Heart left ventricle (tissue), 16 donors: ENCODE measurements at regions of chr19 and their contacts with region 1.

Region 1: DNA sequence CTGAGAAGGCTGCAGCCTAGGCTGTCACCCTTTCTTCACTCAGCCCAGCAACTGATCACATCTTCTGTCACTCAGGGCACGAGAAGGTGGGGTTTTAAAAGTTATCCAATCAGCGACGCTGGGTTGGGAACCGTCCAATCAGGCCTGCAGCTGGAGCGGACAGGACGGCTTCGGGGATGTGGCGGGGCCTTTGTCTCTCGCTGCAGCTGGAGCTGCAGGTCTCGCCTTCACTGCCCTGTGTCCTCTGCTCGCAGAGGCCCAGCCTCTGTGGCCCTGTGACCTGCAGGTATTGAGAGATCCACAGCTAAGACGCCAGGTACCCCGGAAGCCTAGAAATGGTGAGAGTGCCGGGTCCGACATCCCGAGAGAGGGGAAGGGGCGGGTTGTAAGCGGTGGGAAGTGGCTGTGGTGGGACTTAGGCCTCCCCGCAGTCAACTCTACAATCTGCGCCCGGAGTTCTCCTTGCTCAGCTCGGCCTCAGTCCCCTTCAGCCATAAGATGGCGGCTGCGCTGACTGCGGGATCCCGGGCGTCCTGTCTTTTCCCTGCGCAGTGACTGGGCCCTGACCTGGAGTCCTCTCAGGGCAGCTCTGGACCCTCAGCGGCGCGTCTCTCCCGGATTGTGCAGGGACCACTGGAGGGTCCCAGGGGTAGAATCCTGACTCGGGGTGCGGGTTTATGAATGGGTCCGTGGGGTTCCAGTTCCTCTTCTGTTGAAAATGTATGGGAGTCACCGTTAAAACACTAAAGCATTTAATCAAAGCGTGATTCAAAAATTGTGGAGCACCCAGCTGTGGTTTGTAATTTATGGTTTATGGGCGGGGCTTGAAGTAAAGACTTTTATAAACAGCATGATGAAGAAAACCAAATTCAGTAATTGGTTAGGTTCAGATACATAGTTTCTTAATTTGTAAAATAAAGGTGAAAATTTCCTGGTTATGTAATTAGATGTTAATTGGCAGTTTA is at the start of gene ZNF714:
- DNase-seq: peak; percentile 87 to 95 (median 92)
- ATAC-seq: peak; percentile 100
- H3K4me3 ChIP-seq: peak within 1 kb of the TSS; percentile 43 to 89 (median 67)
- H3K27ac ChIP-seq: peak within 1 kb of the TSS in 8 of 12 donors; percentile 31 to 76 (median 68)
- H3K4me1 ChIP-seq: peaks cover 0 to 13% (median 0%) of the 10 kb centered on the region in 12 donors
- H3K27me3 ChIP-seq: no peaks in the 10 kb centered on the region
- CTCF ChIP-seq: no peak
- POLR2A ChIP-seq: no peak
- total RNA-seq, gene ZNF714: 2.0 to 5.6 (median 3.3) TPM

Region 2: GRCh38 chr19:21020298-21021227 is 61.7 kb before region 1 on chr19 and contains the start of gene ZNF430:
- intact Hi-C with region 1: loop called in 1 of 10 experiments (anchors 5 kb)
- DNase-seq: peak; percentile 93 to 96 (median 95)
- ATAC-seq: peak; percentile 100
- H3K4me3 ChIP-seq: peak within 1 kb of the TSS; percentile 65 to 97 (median 84)
- H3K27ac ChIP-seq: peak within 1 kb of the TSS; percentile 65 to 91 (median 80)
- H3K4me1 ChIP-seq: peaks cover 0 to 25% (median 7%) of the 10 kb centered on the region in 12 donors
- H3K27me3 ChIP-seq: no peaks in the 10 kb centered on the region
- CTCF ChIP-seq: no peak
- POLR2A ChIP-seq: peak in 1 of 2 donors; percentile 61
- total RNA-seq, gene ZNF430: 2.9 to 9.1 (median 3.9) TPM

Region 3: GRCh38 chr19:21130097-21130775 is 47.9 kb after region 1 on chr19:
- intact Hi-C with region 1: loop called in 1 of 10 experiments (anchors 10 kb)
- DNase-seq: no peak
- ATAC-seq: no peak
- H3K4me3 ChIP-seq: no peak overlapping the region
- H3K27ac ChIP-seq: no peak overlapping the region
- H3K4me1 ChIP-seq: peaks cover 0 to 6% (median 0%) of the 10 kb centered on the region in 12 donors
- H3K27me3 ChIP-seq: no peaks in the 10 kb centered on the region
- CTCF ChIP-seq: no peak
- POLR2A ChIP-seq: no peak

Region 4: GRCh38 chr19:21141787-21142464 is 59.6 kb after region 1 on chr19 and contains the start of gene ZNF431:
- intact Hi-C with region 1: loop called in 2 of 10 experiments (anchors 5 to 10 kb)
- DNase-seq: peak; percentile 93 to 96 (median 94)
- ATAC-seq: peak; percentile 99 to 100 (median 100)
- H3K4me3 ChIP-seq: peak within 1 kb of the TSS; percentile 70 to 92 (median 81)
- H3K27ac ChIP-seq: peak within 1 kb of the TSS; percentile 3 to 91 (median 73)
- H3K4me1 ChIP-seq: peaks cover 0 to 19% (median 8%) of the 10 kb centered on the region in 12 donors
- H3K27me3 ChIP-seq: no peaks in the 10 kb centered on the region
- CTCF ChIP-seq: no peak
- POLR2A ChIP-seq: peak in 1 of 2 donors; percentile 75
- total RNA-seq, gene ZNF431: 4.6 to 20.0 (median 11.0) TPM